PC-9 (cell line): ENCODE measurements at regions of chr3 and their contacts with region 1.

Region 1: GRCh38 chr3:61574854-61575253 is 13.5 kb downstream of the PTPRG start:
- DNase-seq: peak in 1 of 2 experiments; percentile 74
- H3K4me3 ChIP-seq: no peak overlapping the region
- H3K27ac ChIP-seq: no peak overlapping the region
- H3K4me1 ChIP-seq: no peaks in the 10 kb centered on the region
- H3K27me3 ChIP-seq: no peaks in the 10 kb centered on the region
- CTCF ChIP-seq: no peak

Region 2: GRCh38 chr3:61612211-61613194 is 37.6 kb after region 1 on chr3:
- CTCF ChIA-PET with region 1: no interaction called
- POLR2A ChIA-PET with region 1: no interaction called
- intact Hi-C with region 1: loop called (anchors 1 kb)
- DNase-seq: peak; percentile 13 to 76
- H3K4me3 ChIP-seq: no peak overlapping the region
- H3K27ac ChIP-seq: no peak overlapping the region
- H3K4me1 ChIP-seq: no peaks in the 10 kb centered on the region
- H3K27me3 ChIP-seq: no peaks in the 10 kb centered on the region
- CTCF ChIP-seq: no peak

Region 3: GRCh38 chr3:61627768-61628185 is 52.9 kb after region 1 on chr3:
- CTCF ChIA-PET with region 1: no interaction called
- POLR2A ChIA-PET with region 1: no interaction called
- intact Hi-C with region 1: loop called (anchors 1 kb)
- DNase-seq: peak; percentile 52 to 76
- H3K4me3 ChIP-seq: no peak overlapping the region
- H3K27ac ChIP-seq: 0 out of 2 replicates have a peak overlapping the region, but pooled peaks have one; percentile 5
- H3K4me1 ChIP-seq: peaks cover 33% of the 10 kb centered on the region
- H3K27me3 ChIP-seq: no peaks in the 10 kb centered on the region
- CTCF ChIP-seq: no peak

Region 4: GRCh38 chr3:61650276-61650675 is 75.4 kb after region 1 on chr3:
- CTCF ChIA-PET with region 1: no interaction called
- POLR2A ChIA-PET with region 1: no interaction called
- intact Hi-C with region 1: loop called (anchors 5 kb)
- DNase-seq: no peak
- H3K4me3 ChIP-seq: no peak overlapping the region
- H3K27ac ChIP-seq: no peak overlapping the region
- H3K4me1 ChIP-seq: no peaks in the 10 kb centered on the region
- H3K27me3 ChIP-seq: no peaks in the 10 kb centered on the region
- CTCF ChIP-seq: no peak

Region 5: DNA sequence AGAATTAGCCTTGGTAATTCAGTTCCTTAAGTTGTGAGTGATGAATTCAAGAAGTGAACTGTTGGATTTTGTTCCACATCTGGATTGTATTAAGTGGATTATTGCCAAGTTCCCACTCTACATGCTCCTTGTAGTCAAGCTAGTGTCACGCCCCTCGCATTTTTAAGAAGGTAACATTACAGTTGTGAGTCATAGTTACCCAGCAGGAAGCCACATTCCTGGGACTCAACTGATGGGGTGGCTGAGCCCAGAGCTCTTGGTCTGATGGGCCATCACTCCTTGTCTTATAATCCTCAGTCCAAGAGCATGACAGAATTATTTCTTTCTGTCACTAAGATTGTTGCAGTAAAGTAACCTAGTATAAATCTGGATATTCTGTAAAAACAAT is 89.2 kb after region 1 on chr3:
- CTCF ChIA-PET with region 1: no interaction called
- POLR2A ChIA-PET with region 1: interaction called, 8 read pairs
- intact Hi-C with region 1: loop called (anchors 1 kb)
- DNase-seq: peak; percentile 59 to 79
- H3K4me3 ChIP-seq: no peak overlapping the region
- H3K27ac ChIP-seq: no peak overlapping the region
- H3K4me1 ChIP-seq: peaks cover 11% of the 10 kb centered on the region
- H3K27me3 ChIP-seq: no peaks in the 10 kb centered on the region
- CTCF ChIP-seq: no peak